ENCODE measurements at regions of chr3 and their contacts with region 1.

Region 1: DNA sequence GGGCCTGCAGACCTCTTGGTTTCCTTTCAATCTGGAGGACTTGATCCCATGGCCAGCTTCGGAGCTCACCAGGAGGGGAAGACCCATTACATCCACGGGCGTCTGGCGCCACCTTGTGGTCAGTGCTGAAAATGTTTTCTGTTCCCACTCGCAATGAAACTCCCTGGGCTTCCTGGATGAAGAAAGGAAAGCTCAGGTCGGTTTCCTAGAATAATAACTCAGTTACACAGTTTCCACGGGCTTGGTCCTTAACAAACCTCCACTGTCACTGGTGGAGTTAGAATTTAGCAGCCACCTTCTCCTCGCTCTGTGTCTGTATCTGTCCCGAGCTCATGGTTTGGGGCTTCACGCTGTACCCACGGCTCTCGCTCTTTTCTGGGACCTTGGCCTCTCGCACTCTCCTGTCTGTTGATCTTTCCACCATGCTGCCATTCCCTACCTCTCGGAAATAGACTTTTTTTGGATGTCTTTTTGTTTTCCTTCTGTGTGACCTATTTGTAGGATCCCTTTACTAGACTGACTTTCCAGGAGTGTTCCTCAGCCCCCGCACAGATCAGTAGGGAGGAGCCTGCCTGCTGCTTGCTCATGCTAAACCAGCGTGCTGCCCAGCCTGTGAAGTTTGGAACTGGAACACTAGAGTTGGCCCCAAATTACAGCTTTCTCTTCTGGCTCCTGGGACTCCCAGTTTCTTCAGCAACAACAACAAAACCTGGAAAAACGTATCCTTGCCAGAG is 56.3 kb downstream of the IL20RB start:
- DNase-seq: peak; percentile 70 to 86
- ATAC-seq: peak; percentile 96 to 98
- H3K4me3 ChIP-seq: peak overlapping the region; percentile 38 to 56 (median 54)
- H3K27ac ChIP-seq: peak overlapping the region; percentile 37 to 63 (median 50)
- H3K4me1 ChIP-seq: no peaks in the 10 kb centered on the region
- H3K27me3 ChIP-seq: no peaks in the 10 kb centered on the region
- CTCF ChIP-seq: peak; percentile 88 to 93 (median 92)
- POLR2A ChIP-seq: no peak

Region 2: DNA sequence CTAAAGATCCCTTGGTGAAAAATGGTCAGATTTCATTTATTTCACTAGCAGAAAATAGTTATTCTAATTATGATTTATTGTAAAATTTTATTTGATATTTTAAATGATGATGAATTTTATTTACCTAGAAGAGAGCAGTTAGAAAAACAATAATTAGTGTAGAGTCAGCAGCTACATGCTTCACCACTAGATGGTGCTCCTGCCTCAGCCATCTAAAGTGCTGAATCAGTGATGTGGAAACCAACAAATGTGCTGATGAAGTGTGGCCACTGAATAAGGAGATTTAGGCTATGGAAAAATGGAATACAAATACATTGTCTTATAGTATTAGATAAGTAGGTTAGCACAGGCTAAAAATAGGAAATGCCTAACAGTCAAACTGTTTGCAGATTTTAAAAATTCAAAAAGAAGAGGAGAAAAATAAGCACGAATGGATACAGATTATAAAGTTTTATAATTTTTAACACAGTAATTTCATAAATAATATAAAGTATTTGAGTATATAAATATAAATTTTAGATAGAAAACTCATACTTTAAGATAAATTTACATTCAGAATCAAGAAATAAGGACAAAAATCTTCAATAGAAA is 938.8 kb before region 1 on chr3:
- in situ Hi-C with region 1: loop called in 3 of 4 experiments (anchors 5 to 10 kb)
- intact Hi-C with region 1: loop called (anchors 1 kb)
- DNase-seq: peak; percentile 55 to 73
- ATAC-seq: peak; percentile 82 to 86
- H3K4me3 ChIP-seq: peak overlapping the region in 2 of 4 donors; percentile 10
- H3K27ac ChIP-seq: peak overlapping the region; percentile 69 to 81 (median 78)
- H3K4me1 ChIP-seq: peaks cover 22 to 42% of the 10 kb centered on the region in 2 donors
- H3K27me3 ChIP-seq: no peaks in the 10 kb centered on the region
- CTCF ChIP-seq: peak; percentile 89 to 98 (median 92)
- POLR2A ChIP-seq: no peak

Region 3: GRCh38 chr3:136250226-136250902 is 763.8 kb before region 1 on chr3 and contains the start of gene PCCB:
- in situ Hi-C with region 1: loop called in 1 of 4 experiments (anchors 25 kb)
- intact Hi-C with region 1: loop called (anchors 1 kb)
- DNase-seq: peak; percentile 91 to 95
- ATAC-seq: peak; percentile 91 to 97
- H3K4me3 ChIP-seq: peak within 1 kb of the TSS; percentile 79 to 95 (median 79)
- H3K27ac ChIP-seq: peak within 1 kb of the TSS; percentile 92 to 98 (median 93)
- H3K4me1 ChIP-seq: peaks cover 16 to 20% of the 10 kb centered on the region in 2 donors
- H3K27me3 ChIP-seq: no peaks in the 10 kb centered on the region
- CTCF ChIP-seq: peak; percentile 83 to 97 (median 88)
- POLR2A ChIP-seq: peak; percentile 51 to 58
- total RNA-seq, gene PCCB: 29.8 to 41.4 (median 37.9) TPM

Region 4: GRCh38 chr3:136390574-136390973 is 623.5 kb before region 1 on chr3:
- in situ Hi-C with region 1: loop called in 3 of 4 experiments (anchors 10 to 25 kb)
- intact Hi-C with region 1: loop called (anchors 1 kb)
- DNase-seq: no peak
- ATAC-seq: no peak
- H3K4me3 ChIP-seq: no peak overlapping the region
- H3K27ac ChIP-seq: no peak overlapping the region
- H3K4me1 ChIP-seq: no peaks in the 10 kb centered on the region
- H3K27me3 ChIP-seq: no peaks in the 10 kb centered on the region
- CTCF ChIP-seq: no peak
- POLR2A ChIP-seq: no peak

Region 5: DNA sequence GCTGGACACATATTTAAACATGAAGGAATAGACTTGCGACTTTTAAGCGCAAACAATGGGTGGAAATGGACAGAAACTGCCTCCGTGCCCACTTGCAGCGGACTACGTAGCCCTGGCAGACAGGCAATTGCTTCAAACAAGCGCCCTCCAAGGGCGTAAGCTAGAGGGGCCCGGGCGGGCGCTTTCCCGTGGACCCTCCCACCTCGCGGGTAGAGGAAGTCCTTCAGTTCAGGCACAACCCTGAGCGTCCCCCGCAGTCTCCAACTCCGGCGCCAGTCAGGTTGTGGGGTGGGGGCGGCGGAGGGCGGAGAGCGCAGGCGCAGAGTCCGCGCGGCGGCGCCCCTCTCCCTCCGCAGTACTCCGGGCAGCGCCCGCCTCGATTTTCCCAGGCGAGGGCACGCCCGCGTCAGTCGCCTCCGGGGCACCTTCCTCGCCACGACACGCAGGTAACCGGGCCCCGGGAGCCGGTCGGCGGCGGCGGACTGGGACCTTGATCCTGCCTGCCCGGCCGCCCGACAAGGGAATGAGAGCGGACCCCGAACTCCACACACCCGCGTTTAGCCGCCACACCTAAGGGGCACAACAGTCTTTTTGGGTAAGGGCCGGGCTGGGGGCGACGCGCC is 195.2 kb before region 1 on chr3 and contains the start of gene SLC35G2:
- in situ Hi-C with region 1: no loop called
- intact Hi-C with region 1: loop called (anchors 5 kb)
- DNase-seq: peak in 1 of 2 donors; percentile 2
- ATAC-seq: peak; percentile 36 to 51
- H3K4me3 ChIP-seq: peak within 1 kb of the TSS; percentile 59 to 80 (median 72)
- H3K27ac ChIP-seq: peak within 1 kb of the TSS; percentile 63 to 82 (median 76)
- H3K4me1 ChIP-seq: peaks cover 0 to 4% of the 10 kb centered on the region in 2 donors
- H3K27me3 ChIP-seq: peaks cover 6 to 28% (median 9%) of the 10 kb centered on the region in 3 donors
- CTCF ChIP-seq: no peak
- POLR2A ChIP-seq: peak; percentile 9 to 16
- total RNA-seq, gene SLC35G2: 1.00 to 3.2 (median 1.9) TPM

Region 6: GRCh38 chr3:136995652-136996051 is 18.5 kb before region 1 on chr3:
- in situ Hi-C with region 1: no loop called
- intact Hi-C with region 1: no loop called
- DNase-seq: no peak
- ATAC-seq: no peak
- H3K4me3 ChIP-seq: no peak overlapping the region
- H3K27ac ChIP-seq: peak overlapping the region; percentile 60 to 82 (median 78)
- H3K4me1 ChIP-seq: peaks cover 4 to 10% of the 10 kb centered on the region in 2 donors
- H3K27me3 ChIP-seq: no peaks in the 10 kb centered on the region
- CTCF ChIP-seq: no peak
- POLR2A ChIP-seq: no peak

Measured in gastrocnemius medialis (tissue), 4 donors.